Left lung (tissue), 14 donors: ENCODE measurements at regions of chr5 and their contacts with region 1.

Region 1: GRCh38 chr5:68460147-68460798 is 244.7 kb downstream of the PIK3R1 start:
- DNase-seq: peak in 1 of 4 donors; percentile 62
- ATAC-seq: peak; percentile 69
- H3K4me3 ChIP-seq: no peak overlapping the region
- H3K27ac ChIP-seq: no peak overlapping the region
- H3K4me1 ChIP-seq: peaks cover 6 to 29% of the 10 kb centered on the region in 2 donors
- H3K27me3 ChIP-seq: no peaks in the 10 kb centered on the region
- CTCF ChIP-seq: peak; percentile 67 to 71

Region 2: GRCh38 chr5:68261569-68262065 is 198.7 kb before region 1 on chr5:
- intact Hi-C with region 1: no loop called
- DNase-seq: peak in 1 of 4 donors; percentile 63
- ATAC-seq: peak; percentile 9
- H3K4me3 ChIP-seq: no peak overlapping the region
- H3K27ac ChIP-seq: peak overlapping the region; percentile 10 to 63
- H3K4me1 ChIP-seq: peaks cover 41 to 70% of the 10 kb centered on the region in 2 donors
- H3K27me3 ChIP-seq: no peaks in the 10 kb centered on the region
- CTCF ChIP-seq: peak in 1 of 2 donors; percentile 20

Region 3: GRCh38 chr5:68287976-68288706 is 172.1 kb before region 1 on chr5:
- intact Hi-C with region 1: loop called in 1 of 2 experiments (anchors 5 kb)
- DNase-seq: peak; percentile 74 to 90 (median 80)
- ATAC-seq: peak; percentile 78
- H3K4me3 ChIP-seq: peak overlapping the region; percentile 43 to 48
- H3K27ac ChIP-seq: peak overlapping the region; percentile 83 to 93
- H3K4me1 ChIP-seq: peaks cover 31 to 95% of the 10 kb centered on the region in 2 donors
- H3K27me3 ChIP-seq: no peaks in the 10 kb centered on the region
- CTCF ChIP-seq: no peak